Cardiac septum (tissue), 1 donor: ENCODE measurements at regions of chr11 and their contacts with region 1.

Region 1: DNA sequence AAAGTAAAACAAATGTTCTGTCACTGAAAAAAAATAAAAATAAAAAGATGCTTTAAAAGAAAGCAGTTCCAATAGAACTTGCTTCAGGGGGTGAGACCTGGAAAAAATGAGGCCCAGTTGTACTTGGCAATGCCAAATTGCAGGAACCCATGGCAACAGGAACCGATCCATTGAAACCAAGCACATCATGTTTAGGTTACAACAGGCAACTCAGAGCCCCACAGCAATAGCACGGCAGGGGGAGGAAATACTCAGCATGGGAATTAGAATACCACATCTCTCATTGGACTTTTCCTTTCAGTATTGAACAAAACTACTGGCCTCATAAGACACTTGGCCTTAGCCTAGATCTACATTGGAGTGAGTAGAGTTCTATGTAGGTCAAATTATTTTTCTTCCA is 84.3 kb downstream of the MSANTD4 start:
- DNase-seq: no peak

Region 2: DNA sequence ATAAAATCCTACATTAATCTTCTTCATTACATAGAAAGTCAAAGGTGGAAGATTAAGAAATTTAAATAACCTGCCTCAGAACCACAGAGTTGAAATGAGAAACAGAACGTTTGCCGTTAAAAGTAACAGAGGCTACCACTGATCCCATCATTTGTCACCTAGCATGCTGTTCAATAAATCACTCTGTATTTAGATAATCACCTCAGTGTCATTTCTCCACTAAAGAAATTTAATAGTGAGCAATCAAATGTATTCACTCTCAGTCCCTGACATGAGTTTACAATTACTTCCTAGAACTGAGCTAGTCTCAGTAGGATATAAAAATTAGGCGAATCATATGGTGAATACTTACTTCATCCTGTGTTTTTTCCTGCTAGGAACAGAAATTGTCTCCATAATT is 85.3 kb before region 1 on chr11:
- intact Hi-C with region 1: no loop called
- DNase-seq: no peak

Region 3: GRCh38 chr11:105968021-105968697 is 30.4 kb after region 1 on chr11:
- intact Hi-C with region 1: loop called (anchors 2 kb)
- DNase-seq: no peak